A549 (cell line): ENCODE measurements at regions of chr17 and their contacts with region 1.

Region 1: DNA sequence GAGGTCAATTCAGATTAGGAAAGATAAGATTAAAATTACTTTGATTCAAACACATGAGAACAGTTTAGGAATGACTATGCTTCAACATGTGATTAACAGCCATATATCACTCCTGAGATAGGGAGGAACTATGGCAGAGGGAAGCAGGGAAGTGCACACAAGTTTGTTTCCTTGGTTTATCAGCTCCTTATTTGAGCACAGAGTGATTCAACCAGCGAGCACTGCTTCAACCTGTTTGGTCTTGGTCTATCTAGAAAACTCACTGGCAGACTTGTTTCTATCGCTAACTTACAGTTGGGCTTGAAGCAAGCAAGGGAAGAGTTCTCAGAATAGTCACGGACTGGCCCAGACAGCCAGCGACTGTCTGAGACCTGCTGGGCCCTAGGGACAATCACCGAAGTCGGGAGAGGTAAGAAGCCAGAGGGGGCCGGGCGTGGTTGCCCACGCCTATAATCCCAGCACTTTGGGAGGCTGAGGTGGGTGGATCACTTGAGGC is 23.5 kb downstream of the TUBG1 start:
- DNase-seq: no peak
- ATAC-seq: peak; percentile 49 to 50; a peak in 4 of 6 replicates
- H3K4me3 ChIP-seq: no peak overlapping the region
- H3K27ac ChIP-seq: no peak overlapping the region
- H3K4me1 ChIP-seq: no peaks in the 10 kb centered on the region
- CTCF ChIP-seq: no peak
- EP300 ChIP-seq: no peak
- POLR2A ChIP-seq: no peak
- RAD21 ChIP-seq: no peak

Region 2: GRCh38 chr17:42618442-42619150 is 14.4 kb before region 1 on chr17:
- CTCF ChIA-PET with region 1: interaction called, 14 read pairs
- POLR2A ChIA-PET with region 1: no interaction called
- DNase-seq: peak; percentile 58 to 65
- ATAC-seq: peak; percentile 83 to 85
- H3K4me3 ChIP-seq: no peak overlapping the region
- H3K27ac ChIP-seq: no peak overlapping the region
- H3K4me1 ChIP-seq: peaks cover 16% of the 10 kb centered on the region
- CTCF ChIP-seq: peak; percentile 41
- EP300 ChIP-seq: no peak
- POLR2A ChIP-seq: no peak
- RAD21 ChIP-seq: peak; percentile 54 to 64